CD8-positive, alpha-beta memory T cell (primary cell): ENCODE measurements at regions of chr4 and their contacts with region 1.

Region 1: GRCh38 chr4:80202190-80202711 is 4.9 kb downstream of the PRDM8 start:
- DNase-seq: peak; percentile 68 to 84 (median 77)
- H3K4me3 ChIP-seq: peak overlapping the region; percentile 42
- H3K4me3 Mint-ChIP-seq: peak overlapping the region; percentile 86 to 97 (median 87)
- H3K27ac ChIP-seq: peak overlapping the region; percentile 67
- H3K27ac Mint-ChIP-seq: peak overlapping the region; percentile 74 to 95 (median 94)
- H3K4me1 ChIP-seq: peaks cover 12% of the 10 kb centered on the region
- H3K4me1 Mint-ChIP-seq: peaks cover 27 to 36% (median 27%) of the 10 kb centered on the region in 3 donors
- H3K27me3 ChIP-seq: no peaks in the 10 kb centered on the region
- H3K27me3 Mint-ChIP-seq: peaks cover 0 to 7% of the 10 kb centered on the region in 2 donors

Region 2: GRCh38 chr4:80072744-80073472 is 129.3 kb before region 1 on chr4 and contains the start of gene ANTXR2:
- CTCF ChIA-PET with region 1: interaction called, 15 read pairs
- POLR2A ChIA-PET with region 1: interaction called, 9 read pairs
- DNase-seq: peak; percentile 53 to 76 (median 58)
- H3K4me3 ChIP-seq: peak within 1 kb of the TSS; percentile 81
- H3K4me3 Mint-ChIP-seq: peak within 1 kb of the TSS; percentile 93 to 99 (median 97)
- H3K27ac ChIP-seq: peak within 1 kb of the TSS; percentile 92
- H3K27ac Mint-ChIP-seq: peak within 1 kb of the TSS; percentile 91 to 97 (median 96)
- H3K4me1 ChIP-seq: peaks cover 47% of the 10 kb centered on the region
- H3K4me1 Mint-ChIP-seq: peaks cover 53 to 86% (median 66%) of the 10 kb centered on the region in 3 donors
- H3K27me3 ChIP-seq: no peaks in the 10 kb centered on the region
- H3K27me3 Mint-ChIP-seq: no peaks in the 10 kb centered on the region
- total RNA-seq, gene ANTXR2: 18.2 to 20.6 TPM

Region 3: DNA sequence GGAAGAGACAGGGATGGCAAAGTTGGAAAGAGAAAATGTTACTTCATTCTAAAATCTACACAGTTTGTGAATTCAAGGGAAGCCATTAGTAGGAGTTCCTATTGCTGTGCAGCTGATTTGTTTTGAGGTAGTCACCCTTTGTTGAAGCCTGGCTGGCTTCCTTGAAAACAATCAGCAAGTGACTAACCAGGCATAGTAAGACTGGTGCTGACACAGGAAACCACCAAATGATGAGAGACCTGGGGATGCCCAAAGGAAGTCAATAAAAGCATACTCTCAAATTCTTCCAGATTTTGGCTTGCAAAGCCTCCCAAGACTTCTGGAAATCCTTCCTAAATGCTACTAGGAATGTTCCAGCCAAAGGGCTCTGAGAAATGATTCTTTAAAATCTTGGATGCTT is 28.9 kb before region 1 on chr4:
- CTCF ChIA-PET with region 1: interaction called, 194 read pairs
- POLR2A ChIA-PET with region 1: interaction called, 9 read pairs
- DNase-seq: peak in 4 of 5 donors; percentile 39 to 72 (median 66)
- H3K4me3 ChIP-seq: peak overlapping the region; percentile 2
- H3K4me3 Mint-ChIP-seq: peak overlapping the region; percentile 47 to 82 (median 71)
- H3K27ac ChIP-seq: no peak overlapping the region
- H3K27ac Mint-ChIP-seq: peak overlapping the region; percentile 83 to 98 (median 94)
- H3K4me1 ChIP-seq: peaks cover 43% of the 10 kb centered on the region
- H3K4me1 Mint-ChIP-seq: peaks cover 48 to 67% (median 55%) of the 10 kb centered on the region in 3 donors
- H3K27me3 ChIP-seq: no peaks in the 10 kb centered on the region
- H3K27me3 Mint-ChIP-seq: no peaks in the 10 kb centered on the region

Region 4: GRCh38 chr4:80215449-80216052 is 13.3 kb after region 1 on chr4:
- CTCF ChIA-PET with region 1: interaction called, 27 read pairs
- POLR2A ChIA-PET with region 1: interaction called, 6 read pairs
- DNase-seq: peak in 2 of 5 donors; percentile 38 to 41
- H3K4me3 ChIP-seq: no peak overlapping the region
- H3K4me3 Mint-ChIP-seq: no peak overlapping the region
- H3K27ac ChIP-seq: no peak overlapping the region
- H3K27ac Mint-ChIP-seq: no peak overlapping the region
- H3K4me1 ChIP-seq: no peaks in the 10 kb centered on the region
- H3K4me1 Mint-ChIP-seq: peaks cover 0 to 2% (median 0%) of the 10 kb centered on the region in 3 donors
- H3K27me3 ChIP-seq: no peaks in the 10 kb centered on the region
- H3K27me3 Mint-ChIP-seq: peaks cover 13 to 52% of the 10 kb centered on the region in 2 donors

Region 5: GRCh38 chr4:80221161-80221560 is 18.9 kb after region 1 on chr4:
- CTCF ChIA-PET with region 1: interaction called, 11 read pairs
- POLR2A ChIA-PET with region 1: no interaction called
- DNase-seq: no peak
- H3K4me3 ChIP-seq: no peak overlapping the region
- H3K4me3 Mint-ChIP-seq: no peak overlapping the region
- H3K27ac ChIP-seq: no peak overlapping the region
- H3K27ac Mint-ChIP-seq: no peak overlapping the region
- H3K4me1 ChIP-seq: no peaks in the 10 kb centered on the region
- H3K4me1 Mint-ChIP-seq: no peaks in the 10 kb centered on the region
- H3K27me3 ChIP-seq: no peaks in the 10 kb centered on the region
- H3K27me3 Mint-ChIP-seq: peaks cover 14 to 50% of the 10 kb centered on the region in 2 donors